Activated CD4-positive, alpha-beta T cell treated with anti-CD3 and anti-CD28 coated beads for 36 hours (primary cell): ENCODE measurements at regions of chr1 and their contacts with region 1.

Region 1: GRCh38 chr1:157110003-157110402 is 10.4 kb upstream of the ETV3L start:
- DNase-seq: no peak
- ATAC-seq: no peak
- H3K4me3 Mint-ChIP-seq: no peak overlapping the region
- H3K27ac Mint-ChIP-seq: no peak overlapping the region
- H3K4me1 Mint-ChIP-seq: peaks cover 17% of the 10 kb centered on the region
- H3K27me3 Mint-ChIP-seq: peaks cover 32% of the 10 kb centered on the region

Region 2: DNA sequence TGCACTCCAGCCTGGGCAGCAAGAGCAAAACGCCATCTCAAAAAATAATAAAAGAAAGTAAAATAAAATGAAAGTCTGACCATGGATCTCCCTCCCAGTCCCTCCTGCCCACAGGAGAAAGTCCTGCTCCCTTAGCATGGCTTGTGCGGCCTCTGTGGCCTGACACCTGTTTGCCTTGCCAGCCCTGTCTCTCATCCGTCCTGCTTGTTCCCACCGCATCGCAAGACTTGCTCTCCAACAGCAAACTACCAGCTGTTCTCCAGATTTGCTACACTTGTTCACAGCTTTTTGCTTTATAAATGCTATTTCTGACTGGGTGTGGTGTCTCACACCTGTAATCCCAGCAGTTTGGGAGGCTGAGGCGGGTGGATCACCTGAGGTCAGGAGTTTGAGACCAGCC is 13.1 kb before region 1 on chr1:
- CTCF ChIA-PET with region 1: no interaction called
- POLR2A ChIA-PET with region 1: no interaction called
- intact Hi-C with region 1: no loop called
- DNase-seq: no peak
- ATAC-seq: no peak
- H3K4me3 Mint-ChIP-seq: no peak overlapping the region
- H3K27ac Mint-ChIP-seq: no peak overlapping the region
- H3K4me1 Mint-ChIP-seq: peaks cover 8% of the 10 kb centered on the region
- H3K27me3 Mint-ChIP-seq: no peaks in the 10 kb centered on the region

Region 3: GRCh38 chr1:157156058-157156541 is 46.1 kb after region 1 on chr1:
- CTCF ChIA-PET with region 1: interaction called, 10 read pairs
- POLR2A ChIA-PET with region 1: no interaction called
- intact Hi-C with region 1: no loop called
- DNase-seq: peak; percentile 89
- ATAC-seq: peak; percentile 88
- H3K4me3 Mint-ChIP-seq: no peak overlapping the region
- H3K27ac Mint-ChIP-seq: no peak overlapping the region
- H3K4me1 Mint-ChIP-seq: peaks cover 16% of the 10 kb centered on the region
- H3K27me3 Mint-ChIP-seq: peaks cover 11% of the 10 kb centered on the region